ENCODE measurements at regions of chr19 and their contacts with region 1.

Region 1: GRCh38 chr19:17385878-17386611 is 8.0 kb downstream of the CCDC194 start:
- H3K4me3 Mint-ChIP-seq: no peak overlapping the region
- H3K27ac Mint-ChIP-seq: no peak overlapping the region
- H3K4me1 Mint-ChIP-seq: peaks cover 18% of the 10 kb centered on the region
- H3K27me3 Mint-ChIP-seq: peaks cover 24% of the 10 kb centered on the region

Region 2: DNA sequence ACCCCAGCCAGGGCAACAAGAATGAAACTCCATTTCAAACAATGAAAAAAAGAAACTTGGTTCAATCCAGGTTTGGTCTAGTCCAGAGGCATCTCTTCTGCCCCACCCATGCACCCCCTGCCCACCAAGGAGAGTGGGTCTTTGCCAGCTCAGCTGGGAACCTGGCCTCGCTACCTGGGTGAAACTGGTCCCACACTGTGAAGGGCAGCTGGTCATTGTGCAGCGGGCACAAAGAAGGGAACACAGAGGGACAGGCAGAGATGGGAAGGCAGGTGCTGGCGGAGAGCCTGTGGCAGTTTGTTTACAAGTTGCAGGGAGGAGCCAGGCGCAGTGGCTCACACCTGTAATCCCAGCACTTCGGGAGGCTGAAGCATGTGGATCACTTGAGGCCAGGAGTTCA is 409.6 kb before region 1 on chr19:
- intact Hi-C with region 1: no loop called
- H3K4me3 Mint-ChIP-seq: no peak overlapping the region
- H3K27ac Mint-ChIP-seq: no peak overlapping the region
- H3K4me1 Mint-ChIP-seq: no peaks in the 10 kb centered on the region
- H3K27me3 Mint-ChIP-seq: peaks cover 20% of the 10 kb centered on the region

Region 3: GRCh38 chr19:17346109-17346671 is 39.9 kb before region 1 on chr19:
- intact Hi-C with region 1: loop called (anchors 1 kb)
- H3K4me3 Mint-ChIP-seq: no peak overlapping the region
- H3K27ac Mint-ChIP-seq: no peak overlapping the region
- H3K4me1 Mint-ChIP-seq: peaks cover 27% of the 10 kb centered on the region
- H3K27me3 Mint-ChIP-seq: peaks cover 39% of the 10 kb centered on the region

Measured in dendritic cell treated with granulocyte-macrophage colony-stimulating factor and Interleukin-4, amounts not matched to agents 40 ng/mL and 50 ng/mL, for 4 days (primary cell).